ENCODE measurements at regions of chr13 and their contacts with region 1.

Region 1: GRCh38 chr13:91133941-91134802 is 213.3 kb upstream of the MIR17HG start:
- DNase-seq: peak in 2 of 5 donors; percentile 23 to 32
- ATAC-seq: peak in 3 of 4 donors; percentile 71 to 81 (median 72)
- H3K4me3 ChIP-seq: no peak overlapping the region
- H3K27ac ChIP-seq: no peak overlapping the region
- H3K4me1 ChIP-seq: peaks cover 0 to 10% (median 0%) of the 10 kb centered on the region in 12 donors
- H3K27me3 ChIP-seq: no peaks in the 10 kb centered on the region
- CTCF ChIP-seq: peak; percentile 58 to 78 (median 70)
- POLR2A ChIP-seq: no peak

Region 2: DNA sequence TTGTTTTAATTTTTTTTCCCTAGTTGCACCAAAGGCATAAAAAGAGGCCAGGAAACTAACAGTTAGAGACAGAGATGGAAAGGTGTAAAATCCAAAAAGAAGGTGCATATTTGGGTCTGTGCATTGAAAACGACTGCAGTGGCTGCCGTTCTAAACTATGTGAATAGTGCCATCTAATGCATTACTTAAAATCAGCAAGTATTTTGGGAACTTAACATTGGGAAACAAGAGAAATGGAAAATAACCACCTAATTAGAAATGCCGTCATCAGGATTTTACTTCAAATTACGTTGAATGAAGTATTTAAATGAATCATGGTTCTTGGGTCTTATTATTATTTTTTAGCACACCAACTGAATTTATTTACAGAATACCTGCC is 23.8 kb after region 1 on chr13:
- intact Hi-C with region 1: loop called in 1 of 10 experiments (anchors 2 kb)
- DNase-seq: no peak
- ATAC-seq: no peak
- H3K4me3 ChIP-seq: no peak overlapping the region
- H3K27ac ChIP-seq: no peak overlapping the region
- H3K4me1 ChIP-seq: peaks cover 0 to 10% (median 0%) of the 10 kb centered on the region in 12 donors
- H3K27me3 ChIP-seq: no peaks in the 10 kb centered on the region
- CTCF ChIP-seq: peak in 4 of 12 donors; percentile 12 to 25 (median 20)
- POLR2A ChIP-seq: no peak

Region 3: GRCh38 chr13:91185294-91185863 is 51.2 kb after region 1 on chr13:
- intact Hi-C with region 1: loop called in 9 of 10 experiments (anchors 1 to 5 kb)
- DNase-seq: no peak
- ATAC-seq: peak in 3 of 4 donors; percentile 42 to 52 (median 42)
- H3K4me3 ChIP-seq: no peak overlapping the region
- H3K27ac ChIP-seq: no peak overlapping the region
- H3K4me1 ChIP-seq: no peaks in the 10 kb centered on the region
- H3K27me3 ChIP-seq: peaks cover 0 to 21% (median 0%) of the 10 kb centered on the region in 9 donors
- CTCF ChIP-seq: peak in 10 of 12 donors; percentile 15 to 51 (median 42)
- POLR2A ChIP-seq: no peak

Measured in heart left ventricle (tissue), 16 donors.